Activated B cell treated with CpG ODN at 0.5 μM for 24 hours (primary cell): ENCODE measurements at regions of chr19 and their contacts with region 1.

Region 1: DNA sequence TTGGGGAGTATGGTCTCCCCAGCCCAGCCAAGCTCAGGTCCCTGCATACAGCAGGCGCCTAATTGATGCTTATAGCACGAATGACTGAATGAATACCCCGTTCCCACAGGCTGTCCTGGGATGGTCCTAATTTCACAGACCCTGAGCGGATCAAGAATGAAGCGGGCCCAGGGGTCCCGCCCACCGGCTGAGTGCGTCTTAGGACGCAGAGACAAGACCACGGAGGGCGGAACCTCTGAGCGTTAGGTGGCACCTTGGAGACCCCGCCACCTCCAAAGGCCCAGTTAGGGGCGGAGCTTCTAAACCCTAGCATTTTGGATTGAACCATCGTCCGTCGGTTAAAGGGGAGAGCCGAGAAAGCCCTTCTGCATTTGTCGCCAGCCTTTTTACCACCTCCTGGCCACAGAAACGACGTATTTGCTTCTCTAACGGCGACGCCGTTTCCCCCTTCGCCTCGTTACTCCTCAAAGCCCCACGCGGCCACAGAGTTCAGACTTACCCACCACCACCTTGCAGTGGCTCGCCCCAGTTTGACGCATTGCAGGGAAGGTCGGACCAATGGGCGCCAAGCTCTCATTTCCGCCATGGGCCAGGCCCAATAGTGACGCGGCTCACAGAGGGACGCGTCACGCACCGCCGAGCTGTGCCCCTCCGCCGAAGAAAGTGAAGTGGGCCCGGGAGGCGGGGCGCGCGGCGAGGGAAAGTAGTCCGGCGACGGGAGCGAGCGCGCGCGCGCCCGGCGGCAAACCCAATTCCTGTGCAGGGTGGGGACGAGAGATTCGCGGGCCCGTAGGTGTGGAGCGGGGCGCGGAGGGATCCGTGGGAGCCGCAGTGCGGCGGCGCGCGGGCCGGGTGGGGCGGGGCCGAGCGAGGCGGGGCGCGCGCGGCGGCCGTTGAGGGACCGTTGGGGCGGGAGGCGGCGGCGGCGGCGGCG is 479 bp upstream of the CALM3 start:
- DNase-seq: peak; percentile 99
- ATAC-seq: peak; percentile 90
- H3K4me3 Mint-ChIP-seq: peak overlapping the region; percentile 99
- H3K27ac Mint-ChIP-seq: peak overlapping the region; percentile 100
- H3K4me1 Mint-ChIP-seq: peaks cover 30% of the 10 kb centered on the region
- H3K27me3 Mint-ChIP-seq: no peaks in the 10 kb centered on the region
- CTCF ChIP-seq: no peak

Region 2: GRCh38 chr19:46378268-46378667 is 222.4 kb before region 1 on chr19:
- CTCF ChIA-PET with region 1: no interaction called
- POLR2A ChIA-PET with region 1: no interaction called
- intact Hi-C with region 1: no loop called
- DNase-seq: no peak
- ATAC-seq: no peak
- H3K4me3 Mint-ChIP-seq: no peak overlapping the region
- H3K27ac Mint-ChIP-seq: no peak overlapping the region
- H3K4me1 Mint-ChIP-seq: peaks cover 3% of the 10 kb centered on the region
- H3K27me3 Mint-ChIP-seq: no peaks in the 10 kb centered on the region
- CTCF ChIP-seq: no peak

Region 3: GRCh38 chr19:46624958-46625661 is 24.5 kb after region 1 on chr19 and contains the start of gene PTGIR:
- CTCF ChIA-PET with region 1: no interaction called
- POLR2A ChIA-PET with region 1: interaction called, 58 read pairs
- intact Hi-C with region 1: no loop called
- DNase-seq: no peak
- ATAC-seq: peak; percentile 29
- H3K4me3 Mint-ChIP-seq: peak within 1 kb of the TSS; percentile 80
- H3K27ac Mint-ChIP-seq: peak within 1 kb of the TSS; percentile 67
- H3K4me1 Mint-ChIP-seq: peaks cover 64% of the 10 kb centered on the region
- H3K27me3 Mint-ChIP-seq: no peaks in the 10 kb centered on the region
- CTCF ChIP-seq: no peak
- total RNA-seq, gene PTGIR: 13.4 and 17.8 TPM in 2 replicates

Region 4: GRCh38 chr19:46661020-46661731 is 60.5 kb after region 1 on chr19 and contains the start of gene DACT3:
- CTCF ChIA-PET with region 1: interaction called, 33 read pairs
- POLR2A ChIA-PET with region 1: interaction called, 38 read pairs
- intact Hi-C with region 1: loop called (anchors 1 kb)
- DNase-seq: peak; percentile 100
- ATAC-seq: peak; percentile 91
- H3K4me3 Mint-ChIP-seq: peak within 1 kb of the TSS; percentile 83
- H3K27ac Mint-ChIP-seq: peak within 1 kb of the TSS; percentile 78
- H3K4me1 Mint-ChIP-seq: peaks cover 23% of the 10 kb centered on the region
- H3K27me3 Mint-ChIP-seq: peaks cover 17% of the 10 kb centered on the region
- CTCF ChIP-seq: no peak
- total RNA-seq, gene DACT3: 0.49 and 0.75 TPM in 2 replicates

Region 5: GRCh38 chr19:46746281-46747013 is 145.8 kb after region 1 on chr19 and contains the start of gene STRN4:
- CTCF ChIA-PET with region 1: no interaction called
- POLR2A ChIA-PET with region 1: interaction called, 5 read pairs
- intact Hi-C with region 1: loop called (anchors 2 kb)
- DNase-seq: peak; percentile 51
- ATAC-seq: peak; percentile 66
- H3K4me3 Mint-ChIP-seq: peak within 1 kb of the TSS; percentile 94
- H3K27ac Mint-ChIP-seq: peak within 1 kb of the TSS; percentile 83
- H3K4me1 Mint-ChIP-seq: peaks cover 64% of the 10 kb centered on the region
- H3K27me3 Mint-ChIP-seq: no peaks in the 10 kb centered on the region
- CTCF ChIP-seq: no peak
- total RNA-seq, gene STRN4: 83.9 and 90.4 TPM in 2 replicates

Region 6: GRCh38 chr19:46860125-46860845 is 259.6 kb after region 1 on chr19:
- CTCF ChIA-PET with region 1: no interaction called
- POLR2A ChIA-PET with region 1: interaction called, 3 read pairs
- intact Hi-C with region 1: loop called (anchors 2 kb)
- DNase-seq: peak; percentile 87
- ATAC-seq: peak; percentile 79
- H3K4me3 Mint-ChIP-seq: peak overlapping the region; percentile 92
- H3K27ac Mint-ChIP-seq: peak overlapping the region; percentile 92
- H3K4me1 Mint-ChIP-seq: peaks cover 26% of the 10 kb centered on the region
- H3K27me3 Mint-ChIP-seq: no peaks in the 10 kb centered on the region
- CTCF ChIP-seq: no peak

Region 7: DNA sequence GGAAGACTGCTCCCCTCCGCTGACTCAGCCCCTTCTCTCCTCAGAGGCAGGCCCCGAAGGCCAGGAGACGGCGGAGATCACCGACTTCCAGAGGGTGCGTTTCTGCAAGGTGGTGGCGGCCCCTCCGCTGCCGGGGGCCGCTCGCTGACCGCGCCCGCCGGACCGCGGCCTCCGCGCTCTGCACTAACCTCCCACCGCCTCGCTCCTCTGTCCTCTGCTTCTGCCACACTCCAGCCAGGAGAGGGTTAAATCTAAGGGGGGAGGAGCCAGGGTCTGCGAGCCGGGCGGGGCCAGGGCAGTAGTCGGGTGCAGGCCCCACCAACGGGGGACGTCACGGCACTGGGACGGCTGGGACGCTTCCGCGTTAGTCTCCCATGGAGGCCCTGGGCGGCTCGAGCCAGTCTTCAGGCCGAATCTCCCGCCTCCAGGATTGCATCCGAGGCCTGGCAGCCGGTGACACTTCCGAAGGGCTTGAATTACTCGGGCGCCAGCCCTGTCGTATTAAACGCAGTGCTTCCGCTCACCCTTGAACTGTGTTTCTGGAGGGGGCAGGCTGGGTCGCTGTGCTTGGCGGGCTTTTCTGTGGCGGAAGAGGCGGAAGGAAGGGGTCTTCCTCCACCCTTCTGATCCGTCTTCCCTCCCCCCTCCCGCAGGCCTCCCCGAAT is 672.8 kb after region 1 on chr19:
- CTCF ChIA-PET with region 1: no interaction called
- POLR2A ChIA-PET with region 1: no interaction called
- intact Hi-C with region 1: loop called (anchors 1 kb)
- DNase-seq: peak; percentile 83
- ATAC-seq: peak; percentile 54
- H3K4me3 Mint-ChIP-seq: peak overlapping the region; percentile 96
- H3K27ac Mint-ChIP-seq: peak overlapping the region; percentile 97
- H3K4me1 Mint-ChIP-seq: peaks cover 27% of the 10 kb centered on the region
- H3K27me3 Mint-ChIP-seq: no peaks in the 10 kb centered on the region
- CTCF ChIP-seq: no peak